ENCODE measurements at regions of chr1 and their contacts with region 1.

Region 1: DNA sequence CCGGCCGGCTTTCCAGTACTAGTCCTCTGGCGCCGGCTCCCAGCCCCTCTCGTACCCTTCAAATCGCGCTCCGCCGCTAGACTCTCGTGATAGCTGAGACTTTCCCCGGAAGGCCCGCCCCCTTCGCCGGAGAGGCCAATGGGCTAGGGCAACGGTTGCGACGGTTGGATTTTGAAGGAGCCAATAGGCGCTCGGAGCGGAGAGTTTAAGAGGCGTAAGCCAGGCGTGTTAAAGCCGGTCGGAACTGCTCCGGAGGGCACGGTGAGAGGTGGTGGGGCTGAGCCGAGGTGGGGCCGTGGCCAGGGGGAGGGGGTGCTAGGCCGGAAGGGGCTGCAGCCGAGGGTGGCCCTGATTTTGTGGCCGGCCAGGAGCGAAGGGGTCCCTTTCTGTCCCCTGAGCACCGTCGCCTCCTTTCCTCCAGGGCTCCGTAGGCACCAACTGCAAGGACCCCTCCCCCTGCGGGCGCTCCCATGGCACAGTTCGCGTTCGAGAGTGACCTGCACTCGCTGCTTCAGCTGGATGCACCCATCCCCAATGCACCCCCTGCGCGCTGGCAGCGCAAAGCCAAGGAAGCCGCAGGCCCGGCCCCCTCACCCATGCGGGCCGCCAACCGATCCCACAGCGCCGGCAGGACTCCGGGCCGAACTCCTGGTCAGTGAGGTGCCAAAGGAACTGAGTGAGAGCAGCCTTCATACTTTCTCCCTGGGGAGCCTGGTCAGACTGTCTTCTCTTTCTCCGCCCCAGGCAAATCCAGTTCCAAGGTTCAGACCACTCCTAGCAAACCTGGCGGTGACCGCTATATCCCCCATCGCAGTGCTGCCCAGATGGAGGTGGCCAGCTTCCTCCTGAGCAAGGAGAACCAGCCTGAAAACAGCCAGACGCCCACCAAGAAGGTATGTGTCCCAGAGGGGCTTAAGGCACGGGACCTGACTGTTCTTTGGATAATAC is at the start of gene CDC20:
- DNase-seq: peak; percentile 99
- ATAC-seq: peak; percentile 98 to 99 (median 99)
- H3K4me3 ChIP-seq: peak within 1 kb of the TSS; percentile 2 to 83 (median 72)
- H3K27ac ChIP-seq: peak within 1 kb of the TSS; percentile 72 to 97 (median 94)
- H3K4me1 ChIP-seq: peaks cover 2 to 41% (median 13%) of the 10 kb centered on the region in 9 donors
- H3K27me3 ChIP-seq: no peaks in the 10 kb centered on the region
- CTCF ChIP-seq: no peak
- total RNA-seq, gene CDC20: 0.15 to 9.6 (median 1.5) TPM

Region 2: GRCh38 chr1:43414634-43415223 is 55.7 kb after region 1 on chr1:
- intact Hi-C with region 1: loop called in 1 of 10 experiments (anchors 2 kb)
- DNase-seq: peak in 1 of 2 donors; percentile 50
- ATAC-seq: peak; percentile 73 to 88 (median 82)
- H3K4me3 ChIP-seq: no peak overlapping the region
- H3K27ac ChIP-seq: no peak overlapping the region
- H3K4me1 ChIP-seq: peaks cover 0 to 10% (median 0%) of the 10 kb centered on the region in 9 donors
- H3K27me3 ChIP-seq: no peaks in the 10 kb centered on the region
- CTCF ChIP-seq: peak; percentile 38 to 77 (median 69)

Measured in heart right ventricle (tissue), 16 donors.